Spleen (tissue), 13 donors: ENCODE measurements at regions of chr9 and their contacts with region 1.

Region 1: DNA sequence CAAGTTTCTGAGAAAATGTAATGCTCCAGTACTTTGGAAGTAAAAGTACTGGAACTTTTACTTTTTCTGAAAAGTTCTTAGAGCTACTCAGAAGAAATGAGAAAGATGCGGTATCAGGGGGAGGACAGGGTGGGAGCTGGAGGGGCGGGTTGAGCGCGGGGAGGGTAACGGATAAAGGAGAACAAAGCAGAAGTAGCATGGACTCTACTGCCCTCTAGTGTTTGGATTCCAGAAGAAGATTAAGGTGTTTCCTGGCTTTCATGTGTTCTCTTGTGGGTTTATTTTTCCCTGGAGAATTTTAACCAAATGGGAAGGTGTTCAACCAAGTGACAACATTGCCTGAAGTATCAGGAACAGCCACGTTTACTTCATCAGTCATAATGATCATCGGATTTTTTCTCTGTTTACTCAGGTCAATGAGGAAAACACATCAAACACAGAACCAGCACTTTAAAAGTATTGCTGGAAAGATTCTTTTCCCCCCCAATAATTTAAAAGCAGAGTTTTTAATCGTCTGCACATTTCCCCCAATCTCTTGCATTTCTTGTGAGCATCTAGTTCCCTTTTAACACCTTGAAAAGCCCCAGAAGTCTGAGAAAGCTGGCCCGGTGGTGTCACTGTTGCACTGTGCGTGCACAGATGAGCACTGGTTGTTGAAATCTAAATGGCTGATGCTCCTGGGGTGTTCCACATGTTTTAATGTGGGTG is 190.6 kb downstream of the MPDZ start:
- DNase-seq: no peak
- H3K4me3 ChIP-seq: peak overlapping the region in 1 of 8 donors; percentile 25
- H3K27ac ChIP-seq: no peak overlapping the region
- H3K4me1 ChIP-seq: no peaks in the 10 kb centered on the region
- H3K27me3 ChIP-seq: no peaks in the 10 kb centered on the region
- CTCF ChIP-seq: peak in 8 of 11 experiments; percentile 12 to 67 (median 52)
- POLR2A ChIP-seq: no peak

Region 2: DNA sequence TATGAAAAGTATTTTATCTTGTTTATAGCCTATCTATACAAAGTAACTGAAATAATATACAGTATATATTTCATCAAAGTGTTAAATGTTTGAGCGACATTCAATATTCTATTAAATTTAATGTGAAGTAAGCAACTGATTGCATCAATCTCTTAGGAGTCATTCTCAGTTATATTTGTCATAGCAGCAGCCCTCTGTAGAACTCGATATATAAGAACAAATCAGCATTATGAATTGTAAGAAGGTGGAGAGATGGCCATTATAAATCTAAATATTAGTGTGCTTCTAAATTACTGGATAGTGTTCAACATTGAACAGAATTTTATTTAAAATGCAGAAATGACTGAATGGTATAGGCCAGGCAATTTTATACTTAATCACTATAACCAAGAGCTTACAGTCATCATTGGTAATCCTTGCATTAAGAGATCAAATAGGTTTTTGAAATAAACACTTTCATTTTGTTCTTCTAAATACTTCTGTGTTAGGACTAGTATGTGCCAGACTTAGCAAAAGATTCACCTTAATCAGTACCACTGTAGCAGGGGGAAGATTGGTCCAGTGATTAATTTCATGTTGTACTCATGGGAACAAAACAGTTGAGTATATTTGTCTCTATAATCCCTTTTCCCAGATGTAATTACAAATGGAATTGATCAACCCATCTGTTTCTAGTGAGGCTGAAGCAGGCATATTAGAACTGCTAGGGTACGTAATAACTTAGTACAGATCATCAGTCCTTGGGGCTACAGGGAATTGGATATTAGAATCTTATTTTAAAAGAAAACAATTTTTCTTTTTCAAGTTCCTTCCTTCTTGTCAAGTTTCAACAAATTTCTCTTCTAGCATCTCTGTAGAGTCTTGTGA is 504.0 kb before region 1 on chr9:
- intact Hi-C with region 1: no loop called
- DNase-seq: no peak
- H3K4me3 ChIP-seq: no peak overlapping the region
- H3K27ac ChIP-seq: no peak overlapping the region
- H3K4me1 ChIP-seq: no peaks in the 10 kb centered on the region
- H3K27me3 ChIP-seq: no peaks in the 10 kb centered on the region
- CTCF ChIP-seq: no peak
- POLR2A ChIP-seq: no peak

Region 3: DNA sequence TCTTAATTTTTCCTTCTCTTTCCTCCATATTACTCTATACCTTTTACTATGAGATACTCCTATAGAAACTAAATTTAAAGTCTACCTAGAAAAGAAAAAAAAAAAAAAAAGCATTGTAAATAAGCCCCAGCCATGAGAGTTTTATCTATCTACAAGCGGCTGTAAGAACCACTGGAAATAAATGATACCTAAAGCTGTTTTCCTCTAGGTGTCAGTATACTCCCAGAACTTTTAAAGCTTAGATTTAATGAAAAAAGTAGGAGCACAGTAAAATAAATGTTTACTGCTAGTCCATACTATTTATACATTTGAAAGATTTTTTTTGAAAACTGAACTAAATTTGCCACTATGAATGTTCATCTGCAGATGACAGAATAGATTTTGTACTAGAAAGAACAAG is 369.4 kb before region 1 on chr9:
- intact Hi-C with region 1: loop called (anchors 10 kb)
- DNase-seq: no peak
- H3K4me3 ChIP-seq: no peak overlapping the region
- H3K27ac ChIP-seq: no peak overlapping the region
- H3K4me1 ChIP-seq: peaks cover 0 to 13% (median 8%) of the 10 kb centered on the region in 6 donors
- H3K27me3 ChIP-seq: no peaks in the 10 kb centered on the region
- CTCF ChIP-seq: peak in 4 of 11 experiments; percentile 33 to 42 (median 37)
- POLR2A ChIP-seq: no peak